Activated CD4-positive, alpha-beta T cell treated with anti-CD3 and anti-CD28 coated beads for 36 hours (primary cell): ENCODE measurements at regions of chr14 and their contacts with region 1.

Region 1: GRCh38 chr14:90331497-90332435 is at the start of gene NRDE2:
- DNase-seq: peak; percentile 99
- ATAC-seq: peak; percentile 99
- H3K4me3 Mint-ChIP-seq: peak within 1 kb of the TSS; percentile 89
- H3K27ac Mint-ChIP-seq: peak within 1 kb of the TSS; percentile 93
- H3K4me1 Mint-ChIP-seq: peaks cover 23% of the 10 kb centered on the region
- H3K27me3 Mint-ChIP-seq: peaks cover 2% of the 10 kb centered on the region
- total RNA-seq, gene NRDE2: 22.8 to 25.3 TPM

Region 2: GRCh38 chr14:89833120-89833644 is 498.6 kb before region 1 on chr14:
- CTCF ChIA-PET with region 1: no interaction called
- POLR2A ChIA-PET with region 1: no interaction called
- intact Hi-C with region 1: no loop called
- DNase-seq: no peak
- ATAC-seq: no peak
- H3K4me3 Mint-ChIP-seq: no peak overlapping the region
- H3K27ac Mint-ChIP-seq: no peak overlapping the region
- H3K4me1 Mint-ChIP-seq: no peaks in the 10 kb centered on the region
- H3K27me3 Mint-ChIP-seq: no peaks in the 10 kb centered on the region

Region 3: GRCh38 chr14:90375934-90376333 is 44.2 kb after region 1 on chr14:
- CTCF ChIA-PET with region 1: no interaction called
- POLR2A ChIA-PET with region 1: no interaction called
- intact Hi-C with region 1: no loop called
- DNase-seq: no peak
- ATAC-seq: peak; percentile 19
- H3K4me3 Mint-ChIP-seq: no peak overlapping the region
- H3K27ac Mint-ChIP-seq: no peak overlapping the region
- H3K4me1 Mint-ChIP-seq: peaks cover 3% of the 10 kb centered on the region
- H3K27me3 Mint-ChIP-seq: no peaks in the 10 kb centered on the region

Region 4: DNA sequence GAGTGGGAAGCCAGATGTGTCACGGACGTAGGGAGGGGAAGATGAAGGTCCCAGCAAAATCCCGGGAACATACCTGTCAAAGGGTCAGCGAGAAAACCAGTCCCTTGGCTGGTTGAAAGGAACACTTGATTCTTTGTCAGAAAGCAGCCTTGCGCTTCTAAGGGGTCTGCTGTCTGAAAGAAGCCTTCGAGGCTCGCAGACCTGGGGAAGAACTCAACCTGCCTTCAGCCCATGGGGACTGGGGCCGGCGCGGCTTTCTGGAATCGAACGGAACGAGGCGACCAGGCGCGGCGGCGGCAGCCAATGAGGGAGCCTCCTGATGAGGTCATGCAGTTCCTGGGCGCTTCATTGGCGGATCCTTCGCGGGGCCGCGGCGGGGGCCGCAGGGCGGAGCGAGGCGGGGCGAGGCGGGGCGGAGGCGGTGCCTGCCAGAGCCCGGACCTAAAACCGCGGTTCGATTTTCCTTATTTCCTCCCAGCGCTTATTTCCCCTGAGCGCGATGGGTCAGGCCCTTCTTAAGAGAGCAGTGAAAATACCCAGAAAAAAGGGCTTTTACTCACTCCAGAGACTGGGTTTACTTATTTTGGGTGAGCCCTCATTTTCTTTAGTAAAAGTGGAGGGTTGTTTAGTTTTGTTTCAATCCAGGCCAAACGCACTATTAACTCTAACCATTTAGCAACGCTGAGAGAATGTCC is 496.3 kb after region 1 on chr14:
- CTCF ChIA-PET with region 1: no interaction called
- POLR2A ChIA-PET with region 1: interaction called, 11 read pairs
- intact Hi-C with region 1: loop called in 1 of 2 experiments (anchors 1 kb)
- DNase-seq: peak; percentile 95
- ATAC-seq: peak; percentile 99
- H3K4me3 Mint-ChIP-seq: peak overlapping the region; percentile 68
- H3K27ac Mint-ChIP-seq: peak overlapping the region; percentile 88
- H3K4me1 Mint-ChIP-seq: peaks cover 20% of the 10 kb centered on the region
- H3K27me3 Mint-ChIP-seq: no peaks in the 10 kb centered on the region